Naive thymus-derived CD4-positive, alpha-beta T cell (primary cell): ENCODE measurements at regions of chr19 and their contacts with region 1.

Region 1: GRCh38 chr19:12789904-12790619 is 1.2 kb upstream of the JUNB start:
- DNase-seq: peak; percentile 80 to 97 (median 83)
- ATAC-seq: peak; percentile 48
- H3K4me3 ChIP-seq: peak overlapping the region; percentile 98
- H3K4me3 Mint-ChIP-seq: peak overlapping the region; percentile 89 to 98 (median 94)
- H3K27ac ChIP-seq: peak overlapping the region; percentile 99
- H3K27ac Mint-ChIP-seq: peak overlapping the region; percentile 97 to 100 (median 100)
- H3K4me1 ChIP-seq: peaks cover 42% of the 10 kb centered on the region in 2 donors
- H3K4me1 Mint-ChIP-seq: peaks cover 19 to 37% (median 30%) of the 10 kb centered on the region in 7 donors
- H3K27me3 ChIP-seq: no peaks in the 10 kb centered on the region
- H3K27me3 Mint-ChIP-seq: peaks cover 0 to 2% (median 0%) of the 10 kb centered on the region in 5 donors

Region 2: DNA sequence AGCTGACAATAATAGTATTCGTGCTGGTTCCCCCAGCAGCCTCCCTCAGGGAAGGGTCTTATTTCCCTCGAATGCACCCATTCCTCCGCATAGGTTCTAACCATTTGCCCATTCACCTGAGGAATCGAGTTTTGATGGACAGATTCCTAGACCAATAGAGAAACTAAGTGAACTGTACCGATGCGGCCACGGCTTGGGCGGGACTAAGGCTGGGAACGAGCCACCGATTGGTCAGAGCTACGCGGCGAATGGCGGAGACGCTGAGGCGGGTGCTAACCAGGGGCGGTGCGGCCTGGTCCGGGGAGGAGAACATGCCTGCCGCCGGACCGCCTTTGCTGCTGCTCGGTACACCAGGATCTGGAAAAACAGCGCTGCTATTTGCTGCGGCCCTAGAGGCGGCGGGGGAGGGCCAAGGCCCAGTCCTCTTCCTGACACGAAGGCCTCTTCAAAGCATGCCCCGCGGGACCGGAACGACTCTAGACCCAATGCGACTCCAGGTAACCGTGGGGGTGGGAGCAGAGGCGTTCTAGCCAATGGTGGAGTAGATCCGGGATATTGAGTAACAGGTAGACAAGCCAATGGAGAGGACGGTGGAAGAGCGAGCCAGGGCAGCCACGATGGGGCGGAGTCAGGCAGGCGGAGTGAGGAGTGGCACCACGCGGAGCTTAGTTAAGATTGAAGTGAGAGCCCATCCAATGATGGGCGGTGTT is 1415.5 kb before region 1 on chr19 and contains the start of gene SWSAP1:
- CTCF ChIA-PET with region 1: no interaction called
- POLR2A ChIA-PET with region 1: interaction called, 4 read pairs
- intact Hi-C with region 1: loop called in 1 of 2 experiments (anchors 5 kb)
- DNase-seq: peak; percentile 87 to 99 (median 99)
- ATAC-seq: peak; percentile 94
- H3K4me3 ChIP-seq: peak within 1 kb of the TSS; percentile 92
- H3K4me3 Mint-ChIP-seq: peak within 1 kb of the TSS in 3 of 10 donors; percentile 31 to 56 (median 45)
- H3K27ac ChIP-seq: peak within 1 kb of the TSS; percentile 92
- H3K27ac Mint-ChIP-seq: peak within 1 kb of the TSS in 1 of 9 donors; percentile 22
- H3K4me1 ChIP-seq: peaks cover 21 to 30% of the 10 kb centered on the region in 2 donors
- H3K4me1 Mint-ChIP-seq: peaks cover 12 to 40% (median 28%) of the 10 kb centered on the region in 7 donors
- H3K27me3 ChIP-seq: no peaks in the 10 kb centered on the region
- H3K27me3 Mint-ChIP-seq: no peaks in the 10 kb centered on the region
- total RNA-seq, gene SWSAP1: 3.4 to 4.2 (median 4.0) TPM

Region 3: GRCh38 chr19:12722566-12723380 is 67.3 kb before region 1 on chr19:
- CTCF ChIA-PET with region 1: interaction called, 6 read pairs
- POLR2A ChIA-PET with region 1: interaction called, 33 read pairs
- intact Hi-C with region 1: no loop called
- DNase-seq: peak; percentile 66 to 97 (median 91)
- ATAC-seq: peak; percentile 96
- H3K4me3 ChIP-seq: peak overlapping the region; percentile 91
- H3K4me3 Mint-ChIP-seq: peak overlapping the region; percentile 86 to 96 (median 93)
- H3K27ac ChIP-seq: peak overlapping the region; percentile 85
- H3K27ac Mint-ChIP-seq: peak overlapping the region; percentile 89 to 97 (median 95)
- H3K4me1 ChIP-seq: peaks cover 11 to 16% of the 10 kb centered on the region in 2 donors
- H3K4me1 Mint-ChIP-seq: peaks cover 20 to 43% (median 38%) of the 10 kb centered on the region in 7 donors
- H3K27me3 ChIP-seq: no peaks in the 10 kb centered on the region
- H3K27me3 Mint-ChIP-seq: peaks cover 0 to 2% (median 0%) of the 10 kb centered on the region in 5 donors

Region 4: DNA sequence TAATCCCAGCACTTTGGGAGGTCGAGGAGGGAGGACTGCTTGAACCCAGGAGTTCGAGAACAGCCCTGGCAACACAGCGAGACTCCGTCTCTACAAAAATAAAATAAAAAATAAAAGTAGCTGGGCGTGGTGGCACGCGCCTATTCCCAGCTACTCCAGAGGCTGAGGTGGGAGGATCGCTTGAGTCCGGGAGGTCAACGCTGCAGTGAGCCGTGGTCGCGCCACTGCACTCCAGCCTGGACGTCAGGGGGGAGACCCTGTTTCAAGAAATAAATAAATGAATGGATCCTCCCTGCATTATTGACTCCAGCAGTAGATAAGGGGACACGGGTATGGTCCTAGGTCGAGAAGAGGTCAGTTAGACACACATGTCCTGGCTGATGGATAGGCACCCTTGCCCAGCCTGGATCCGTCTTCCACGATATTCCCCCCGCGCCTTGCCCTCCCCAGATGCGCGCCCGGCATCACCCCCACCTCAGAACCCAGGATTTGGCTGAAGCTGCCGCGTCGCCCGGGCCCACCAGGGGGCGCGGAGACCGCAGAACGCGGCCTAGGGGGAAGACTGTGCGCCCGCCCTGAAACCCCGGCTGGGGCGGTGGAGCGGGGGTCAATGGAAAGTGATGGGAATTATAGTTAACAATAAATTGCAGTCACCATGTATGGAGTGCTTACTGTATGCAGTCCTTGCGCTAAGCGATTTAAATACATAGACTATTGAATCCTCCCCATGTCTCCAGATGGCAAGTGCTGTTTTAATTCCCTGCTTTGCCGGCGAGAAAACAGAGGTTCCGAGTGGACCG is 12.6 kb before region 1 on chr19:
- CTCF ChIA-PET with region 1: interaction called, 169 read pairs
- POLR2A ChIA-PET with region 1: interaction called, 621 read pairs
- intact Hi-C with region 1: loop called (anchors 1 kb)
- DNase-seq: peak; percentile 69 to 89 (median 82)
- ATAC-seq: peak; percentile 18
- H3K4me3 ChIP-seq: peak overlapping the region; percentile 76
- H3K4me3 Mint-ChIP-seq: peak overlapping the region; percentile 82 to 95 (median 87)
- H3K27ac ChIP-seq: peak overlapping the region; percentile 94
- H3K27ac Mint-ChIP-seq: peak overlapping the region; percentile 42 to 98 (median 94)
- H3K4me1 ChIP-seq: peaks cover 16 to 28% of the 10 kb centered on the region in 2 donors
- H3K4me1 Mint-ChIP-seq: peaks cover 20 to 45% (median 39%) of the 10 kb centered on the region in 7 donors
- H3K27me3 ChIP-seq: no peaks in the 10 kb centered on the region
- H3K27me3 Mint-ChIP-seq: no peaks in the 10 kb centered on the region

Region 5: DNA sequence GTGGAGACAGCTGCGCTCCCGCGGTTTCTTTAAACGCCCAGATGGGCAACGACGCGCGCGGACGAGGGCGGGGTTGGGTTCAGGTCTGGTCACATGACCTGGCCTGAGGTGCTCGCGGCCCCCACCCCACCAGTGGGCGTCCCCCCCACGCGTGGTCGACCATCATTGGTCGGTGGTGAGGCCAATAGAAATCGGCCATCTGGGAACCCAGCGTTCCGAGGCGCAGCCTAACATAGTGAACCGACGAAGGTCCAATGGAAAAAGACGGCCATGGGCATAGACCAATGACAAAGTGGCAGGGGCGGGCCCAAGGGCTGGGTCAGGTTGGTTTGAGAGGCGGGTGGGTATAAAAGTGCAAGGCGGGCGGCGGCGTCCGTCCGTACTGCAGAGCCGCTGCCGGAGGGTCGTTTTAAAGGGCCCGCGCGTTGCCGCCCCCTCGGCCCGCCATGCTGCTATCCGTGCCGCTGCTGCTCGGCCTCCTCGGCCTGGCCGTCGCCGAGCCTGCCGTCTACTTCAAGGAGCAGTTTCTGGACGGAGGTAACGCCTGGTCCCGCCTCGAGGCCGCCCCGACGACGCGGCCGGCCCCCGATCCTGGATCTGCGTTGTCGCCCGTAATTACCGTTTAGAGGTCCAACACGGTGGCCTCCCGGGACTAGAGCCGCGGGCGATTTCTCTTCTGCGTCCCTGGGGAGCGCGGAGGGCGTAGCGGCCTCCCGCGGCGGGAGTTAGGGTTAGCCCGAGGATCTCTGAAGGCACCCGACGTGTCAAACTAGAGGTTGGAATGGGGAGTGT is 148.4 kb after region 1 on chr19 and contains the start of gene CALR:
- CTCF ChIA-PET with region 1: no interaction called
- POLR2A ChIA-PET with region 1: interaction called, 11 read pairs
- intact Hi-C with region 1: loop called (anchors 5 kb)
- DNase-seq: peak; percentile 93 to 100 (median 99)
- ATAC-seq: peak; percentile 94
- H3K4me3 ChIP-seq: peak within 1 kb of the TSS; percentile 90
- H3K4me3 Mint-ChIP-seq: peak within 1 kb of the TSS; percentile 90 to 99 (median 98)
- H3K27ac ChIP-seq: peak within 1 kb of the TSS; percentile 94
- H3K27ac Mint-ChIP-seq: peak within 1 kb of the TSS; percentile 93 to 98 (median 96)
- H3K4me1 ChIP-seq: peaks cover 37 to 41% of the 10 kb centered on the region in 2 donors
- H3K4me1 Mint-ChIP-seq: peaks cover 36 to 76% (median 57%) of the 10 kb centered on the region in 7 donors
- H3K27me3 ChIP-seq: no peaks in the 10 kb centered on the region
- H3K27me3 Mint-ChIP-seq: no peaks in the 10 kb centered on the region
- total RNA-seq, gene CALR: 449 to 1,130 (median 502) TPM

Region 6: DNA sequence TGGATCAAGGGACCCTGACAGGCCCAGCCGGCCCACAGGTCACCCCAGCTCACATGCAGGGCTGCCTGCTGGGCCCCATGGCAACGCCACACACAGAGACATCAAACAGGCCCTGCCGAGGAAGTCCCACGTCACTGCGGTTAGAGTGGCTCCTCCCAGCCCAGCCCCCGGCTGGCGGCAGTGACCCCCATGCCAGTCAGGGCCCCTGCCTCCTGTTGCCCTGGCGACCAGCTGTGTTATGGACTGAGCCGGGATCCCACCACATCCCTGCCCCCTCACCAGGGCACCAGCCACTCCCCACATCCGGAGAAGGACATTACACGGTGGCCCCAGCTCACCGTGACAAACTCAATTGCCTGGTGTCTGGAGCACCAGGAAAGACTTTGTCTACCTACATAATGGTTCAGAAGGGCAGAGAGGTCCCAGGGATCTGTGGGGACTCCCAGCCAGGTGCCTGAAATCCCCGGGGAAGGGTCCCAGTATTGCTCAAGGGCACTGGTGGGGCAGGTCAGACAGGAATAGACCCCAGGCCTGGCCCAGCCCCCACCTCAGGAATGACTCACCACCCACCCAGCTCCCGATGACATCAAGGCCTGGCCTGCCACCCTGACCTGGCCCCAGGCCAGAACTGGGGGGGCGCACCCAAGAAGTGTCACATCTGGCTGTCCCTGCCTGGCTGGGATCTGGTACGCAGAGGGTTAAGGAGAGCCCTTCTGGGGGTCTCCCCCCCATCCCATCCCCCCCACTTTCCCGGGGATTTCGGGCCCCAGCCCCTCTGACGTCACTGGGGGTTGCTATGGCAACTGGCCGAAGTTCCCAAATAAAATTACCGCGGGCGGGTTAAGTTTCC is 1056.7 kb after region 1 on chr19:
- CTCF ChIA-PET with region 1: no interaction called
- POLR2A ChIA-PET with region 1: no interaction called
- intact Hi-C with region 1: loop called in 1 of 2 experiments (anchors 5 kb)
- DNase-seq: peak; percentile 91 to 98 (median 97)
- ATAC-seq: peak; percentile 75
- H3K4me3 ChIP-seq: peak overlapping the region; percentile 72
- H3K4me3 Mint-ChIP-seq: peak overlapping the region; percentile 82 to 96 (median 90)
- H3K27ac ChIP-seq: peak overlapping the region; percentile 95
- H3K27ac Mint-ChIP-seq: peak overlapping the region; percentile 99 to 100 (median 100)
- H3K4me1 ChIP-seq: peaks cover 47 to 55% of the 10 kb centered on the region in 2 donors
- H3K4me1 Mint-ChIP-seq: peaks cover 19 to 62% (median 55%) of the 10 kb centered on the region in 7 donors
- H3K27me3 ChIP-seq: no peaks in the 10 kb centered on the region
- H3K27me3 Mint-ChIP-seq: peaks cover 0 to 3% (median 0%) of the 10 kb centered on the region in 5 donors